Posterior vena cava (tissue), 2 donors: ENCODE measurements at regions of chr3 and their contacts with region 1.

Region 1: DNA sequence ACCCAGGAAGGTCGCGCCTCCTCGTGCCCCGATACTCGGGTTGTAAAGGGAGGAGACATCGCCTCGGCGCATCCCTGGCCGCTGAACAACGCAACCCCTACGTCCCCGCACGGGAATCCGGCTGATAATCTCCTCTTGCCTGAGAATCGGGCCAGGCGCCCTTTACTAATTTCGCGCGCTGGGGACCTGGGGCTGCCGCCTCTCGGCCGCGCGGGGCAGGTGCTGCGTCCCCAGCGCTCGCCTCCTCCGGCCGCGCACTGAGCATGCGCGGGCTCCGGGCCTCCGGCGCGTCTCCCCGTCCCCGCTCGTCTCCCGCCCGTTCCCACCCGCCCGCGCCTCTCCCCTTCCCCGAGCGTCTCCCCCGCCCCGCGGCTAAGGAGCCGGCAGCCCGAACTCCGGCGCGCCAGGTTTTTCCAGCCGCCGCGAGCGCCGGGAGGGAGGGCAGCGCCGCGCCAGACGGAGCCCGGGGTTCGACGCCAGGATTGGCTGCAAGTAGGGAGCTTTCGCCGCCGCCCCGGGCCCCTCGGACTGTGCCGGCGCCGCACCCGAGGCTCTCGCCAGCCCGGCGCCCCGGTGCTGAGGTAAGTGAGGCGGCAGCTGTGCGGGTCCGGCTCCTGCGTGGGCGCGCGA is at the start of gene CNTN4:
- DNase-seq: peak; percentile 86
- total RNA-seq, gene CNTN4: 48.3 to 66.5 TPM

Region 2: DNA sequence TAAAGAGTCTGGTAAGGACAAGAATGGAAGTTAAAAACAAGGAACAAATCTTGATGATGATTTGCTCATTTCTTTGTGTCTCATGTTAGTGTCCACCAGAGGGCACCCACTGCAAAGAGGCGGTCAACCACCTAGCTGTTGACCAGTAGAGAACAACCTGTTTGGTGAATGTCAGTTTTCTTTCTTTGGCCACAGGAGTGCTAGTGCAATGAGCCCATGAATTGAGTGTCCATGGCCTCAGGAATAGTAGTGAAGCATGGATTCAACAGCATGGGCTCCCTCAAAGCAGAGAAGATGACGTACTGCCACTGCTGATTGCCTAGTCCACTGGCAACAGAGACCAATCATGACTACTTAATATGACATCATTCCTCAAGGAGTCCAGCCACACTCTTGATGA is 1016.4 kb before region 1 on chr3:
- intact Hi-C with region 1: loop called in 1 of 2 experiments (anchors 5 kb)
- DNase-seq: no peak